Naive thymus-derived CD4-positive, alpha-beta T cell (primary cell): ENCODE measurements at regions of chr15 and their contacts with region 1.

Region 1: GRCh38 chr15:45198337-45199135 is 10.8 kb upstream of the SHF start:
- DNase-seq: peak; percentile 82 to 98 (median 98)
- ATAC-seq: peak; percentile 80
- H3K4me3 ChIP-seq: peak overlapping the region; percentile 69
- H3K4me3 Mint-ChIP-seq: no peak overlapping the region
- H3K27ac ChIP-seq: peak overlapping the region; percentile 90
- H3K27ac Mint-ChIP-seq: no peak overlapping the region
- H3K4me1 ChIP-seq: peaks cover 9 to 10% of the 10 kb centered on the region in 2 donors
- H3K4me1 Mint-ChIP-seq: peaks cover 0 to 16% (median 8%) of the 10 kb centered on the region in 7 donors
- H3K27me3 ChIP-seq: no peaks in the 10 kb centered on the region
- H3K27me3 Mint-ChIP-seq: peaks cover 0 to 11% (median 0%) of the 10 kb centered on the region in 5 donors

Region 2: GRCh38 chr15:43510200-43511011 is 1688.1 kb before region 1 on chr15:
- CTCF ChIA-PET with region 1: no interaction called
- POLR2A ChIA-PET with region 1: no interaction called
- intact Hi-C with region 1: loop called in 1 of 2 experiments (anchors 2 kb)
- DNase-seq: peak; percentile 91 to 96 (median 94)
- ATAC-seq: peak; percentile 97
- H3K4me3 ChIP-seq: peak overlapping the region; percentile 88
- H3K4me3 Mint-ChIP-seq: peak overlapping the region; percentile 89 to 100 (median 94)
- H3K27ac ChIP-seq: peak overlapping the region; percentile 76
- H3K27ac Mint-ChIP-seq: peak overlapping the region; percentile 92 to 99 (median 97)
- H3K4me1 ChIP-seq: peaks cover 14 to 17% of the 10 kb centered on the region in 2 donors
- H3K4me1 Mint-ChIP-seq: peaks cover 14 to 51% (median 28%) of the 10 kb centered on the region in 7 donors
- H3K27me3 ChIP-seq: no peaks in the 10 kb centered on the region
- H3K27me3 Mint-ChIP-seq: peaks cover 0 to 2% (median under 1%) of the 10 kb centered on the region in 5 donors

Region 3: DNA sequence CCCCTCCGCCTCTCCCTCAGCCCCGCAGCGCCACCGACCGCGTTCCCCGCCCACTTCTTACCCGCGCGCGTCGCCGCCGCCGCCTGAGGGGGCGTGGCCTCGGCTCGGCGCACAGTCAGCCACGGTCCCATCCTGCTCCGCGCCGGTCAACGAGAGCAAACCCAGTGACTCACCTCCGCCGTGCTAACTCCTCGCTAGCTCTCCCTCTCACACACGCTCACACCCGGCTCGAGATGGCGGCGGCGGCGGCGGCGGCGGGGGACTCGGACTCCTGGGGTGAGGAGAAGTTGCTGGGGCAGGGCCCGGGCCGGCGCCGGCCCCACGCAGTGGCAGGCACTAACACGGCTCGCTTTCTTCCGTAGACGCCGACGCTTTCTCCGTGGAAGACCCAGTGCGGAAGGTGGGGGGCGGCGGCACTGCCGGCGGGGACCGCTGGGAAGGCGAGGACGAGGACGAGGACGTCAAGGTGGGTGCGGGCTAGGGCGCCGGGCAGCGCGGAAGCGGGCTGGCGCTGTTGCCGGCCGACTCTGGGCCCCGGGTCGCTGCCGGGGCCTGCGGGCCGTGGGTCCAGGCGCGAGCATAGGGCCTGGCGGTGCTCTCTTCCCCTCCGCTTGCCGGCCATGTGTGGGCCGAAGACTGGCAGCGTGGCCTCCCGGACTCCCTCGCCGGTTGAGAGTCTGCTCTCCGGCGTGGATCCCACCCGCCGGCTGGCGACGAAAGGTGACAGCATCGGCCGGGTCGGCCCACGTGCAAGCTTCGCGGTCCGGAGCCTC is 661.4 kb before region 1 on chr15 and contains the start of gene EIF3J:
- CTCF ChIA-PET with region 1: no interaction called
- POLR2A ChIA-PET with region 1: interaction called, 4 read pairs
- intact Hi-C with region 1: loop called (anchors 1 to 2 kb)
- DNase-seq: peak; percentile 92 to 96 (median 95)
- ATAC-seq: peak; percentile 95
- H3K4me3 ChIP-seq: peak within 1 kb of the TSS; percentile 96
- H3K4me3 Mint-ChIP-seq: peak within 1 kb of the TSS; percentile 83 to 98 (median 94)
- H3K27ac ChIP-seq: peak within 1 kb of the TSS; percentile 97
- H3K27ac Mint-ChIP-seq: peak within 1 kb of the TSS; percentile 87 to 98 (median 95)
- H3K4me1 ChIP-seq: peaks cover 27 to 29% of the 10 kb centered on the region in 2 donors
- H3K4me1 Mint-ChIP-seq: peaks cover 35 to 60% (median 51%) of the 10 kb centered on the region in 7 donors
- H3K27me3 ChIP-seq: no peaks in the 10 kb centered on the region
- H3K27me3 Mint-ChIP-seq: no peaks in the 10 kb centered on the region
- total RNA-seq, gene EIF3J: 52.9 to 83.4 (median 66.5) TPM

Region 4: GRCh38 chr15:44728576-44729407 is 469.7 kb before region 1 on chr15:
- CTCF ChIA-PET with region 1: no interaction called
- POLR2A ChIA-PET with region 1: interaction called, 3 read pairs
- intact Hi-C with region 1: loop called in 1 of 2 experiments (anchors 5 kb)
- DNase-seq: peak; percentile 75 to 97 (median 96)
- ATAC-seq: peak; percentile 88
- H3K4me3 ChIP-seq: peak overlapping the region; percentile 94
- H3K4me3 Mint-ChIP-seq: peak overlapping the region; percentile 87 to 100 (median 99)
- H3K27ac ChIP-seq: peak overlapping the region; percentile 99
- H3K27ac Mint-ChIP-seq: peak overlapping the region; percentile 98 to 100 (median 100)
- H3K4me1 ChIP-seq: peaks cover 52 to 56% of the 10 kb centered on the region in 2 donors
- H3K4me1 Mint-ChIP-seq: peaks cover 54 to 86% (median 77%) of the 10 kb centered on the region in 7 donors
- H3K27me3 ChIP-seq: no peaks in the 10 kb centered on the region
- H3K27me3 Mint-ChIP-seq: peaks cover 0 to 2% (median 0%) of the 10 kb centered on the region in 5 donors

Region 5: GRCh38 chr15:45126535-45127158 is 71.9 kb before region 1 on chr15:
- CTCF ChIA-PET with region 1: no interaction called
- POLR2A ChIA-PET with region 1: interaction called, 3 read pairs
- intact Hi-C with region 1: loop called (anchors 2 to 10 kb)
- DNase-seq: peak in 7 of 9 donors; percentile 17 to 51 (median 43)
- ATAC-seq: peak; percentile 72
- H3K4me3 ChIP-seq: no peak overlapping the region
- H3K4me3 Mint-ChIP-seq: no peak overlapping the region
- H3K27ac ChIP-seq: no peak overlapping the region
- H3K27ac Mint-ChIP-seq: no peak overlapping the region
- H3K4me1 ChIP-seq: no peaks in the 10 kb centered on the region
- H3K4me1 Mint-ChIP-seq: peaks cover 0 to 13% (median 6%) of the 10 kb centered on the region in 7 donors
- H3K27me3 ChIP-seq: peaks cover 0 to 8% of the 10 kb centered on the region in 2 donors
- H3K27me3 Mint-ChIP-seq: peaks cover 59 to 70% (median 61%) of the 10 kb centered on the region in 5 donors

Region 6: GRCh38 chr15:45279024-45279698 is 80.6 kb after region 1 on chr15:
- CTCF ChIA-PET with region 1: interaction called, 6 read pairs
- POLR2A ChIA-PET with region 1: interaction called, 16 read pairs
- intact Hi-C with region 1: loop called (anchors 1 kb)
- DNase-seq: peak; percentile 93 to 99 (median 98)
- ATAC-seq: peak; percentile 100
- H3K4me3 ChIP-seq: peak overlapping the region; percentile 90
- H3K4me3 Mint-ChIP-seq: peak overlapping the region; percentile 90 to 99 (median 95)
- H3K27ac ChIP-seq: peak overlapping the region; percentile 84
- H3K27ac Mint-ChIP-seq: peak overlapping the region; percentile 84 to 99 (median 93)
- H3K4me1 ChIP-seq: peaks cover 9 to 12% of the 10 kb centered on the region in 2 donors
- H3K4me1 Mint-ChIP-seq: peaks cover 10 to 34% (median 23%) of the 10 kb centered on the region in 7 donors
- H3K27me3 ChIP-seq: no peaks in the 10 kb centered on the region
- H3K27me3 Mint-ChIP-seq: peaks cover 0 to 1% (median 0%) of the 10 kb centered on the region in 5 donors

Region 7: DNA sequence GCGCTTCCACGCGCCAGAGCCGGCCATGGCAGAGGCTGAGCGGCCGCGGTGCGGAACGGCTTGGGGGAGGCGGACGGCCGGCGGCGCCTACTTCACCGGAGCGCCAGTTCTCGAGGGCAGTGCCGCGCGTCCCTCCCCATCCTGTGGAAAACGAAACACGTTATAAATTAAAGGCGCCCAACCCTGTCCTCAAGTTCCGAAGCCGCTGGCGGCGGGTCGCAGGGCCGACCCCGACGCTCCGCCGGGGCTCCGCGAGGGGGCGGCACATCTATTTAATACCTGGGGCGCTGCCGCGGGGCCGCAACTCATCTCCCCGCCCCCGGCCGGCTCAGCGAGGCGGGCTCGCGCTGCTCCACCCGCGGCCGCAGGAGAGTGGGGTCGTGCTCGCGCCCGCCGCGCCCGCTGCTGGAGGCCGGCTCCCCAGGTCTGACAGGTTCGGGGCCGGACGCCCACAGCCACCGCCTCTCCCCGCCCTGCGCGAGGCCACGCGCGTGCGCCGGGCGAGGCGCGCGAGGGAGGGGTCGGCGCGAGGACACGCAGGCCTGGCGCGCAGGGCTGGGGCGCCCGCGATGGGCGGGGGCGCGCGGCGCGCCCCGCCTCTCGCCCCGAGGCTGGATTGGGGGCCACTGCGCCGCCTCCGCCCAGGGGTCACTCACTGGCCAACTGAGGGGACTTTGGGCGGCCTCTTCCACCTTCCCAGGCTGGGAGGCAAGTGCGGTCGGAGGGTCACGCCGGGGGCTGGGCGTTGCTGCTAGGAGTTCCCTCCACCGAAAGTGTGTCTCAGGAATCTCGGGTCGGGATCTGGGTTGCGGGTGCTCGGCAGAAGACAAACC is 324.0 kb after region 1 on chr15 and contains the start of gene SLC30A4:
- CTCF ChIA-PET with region 1: no interaction called
- POLR2A ChIA-PET with region 1: no interaction called
- intact Hi-C with region 1: loop called (anchors 2 to 10 kb)
- DNase-seq: peak; percentile 49 to 75 (median 66)
- ATAC-seq: peak; percentile 92
- H3K4me3 ChIP-seq: peak within 1 kb of the TSS; percentile 66
- H3K4me3 Mint-ChIP-seq: peak within 1 kb of the TSS; percentile 93 to 98 (median 94)
- H3K27ac ChIP-seq: peak within 1 kb of the TSS; percentile 64
- H3K27ac Mint-ChIP-seq: peak within 1 kb of the TSS; percentile 79 to 90 (median 85)
- H3K4me1 ChIP-seq: peaks cover 0 to 8% of the 10 kb centered on the region in 2 donors
- H3K4me1 Mint-ChIP-seq: peaks cover 23 to 43% (median 33%) of the 10 kb centered on the region in 7 donors
- H3K27me3 ChIP-seq: no peaks in the 10 kb centered on the region
- H3K27me3 Mint-ChIP-seq: peaks cover 0 to 40% (median 0%) of the 10 kb centered on the region in 5 donors
- total RNA-seq, gene SLC30A4: 2.6 to 4.4 (median 3.0) TPM

Region 8: GRCh38 chr15:45958922-45959321 is 760.4 kb after region 1 on chr15:
- CTCF ChIA-PET with region 1: no interaction called
- POLR2A ChIA-PET with region 1: no interaction called
- intact Hi-C with region 1: no loop called
- DNase-seq: no peak
- ATAC-seq: no peak
- H3K4me3 ChIP-seq: no peak overlapping the region
- H3K4me3 Mint-ChIP-seq: no peak overlapping the region
- H3K27ac ChIP-seq: no peak overlapping the region
- H3K27ac Mint-ChIP-seq: no peak overlapping the region
- H3K4me1 ChIP-seq: no peaks in the 10 kb centered on the region
- H3K4me1 Mint-ChIP-seq: no peaks in the 10 kb centered on the region
- H3K27me3 ChIP-seq: no peaks in the 10 kb centered on the region
- H3K27me3 Mint-ChIP-seq: peaks cover 0 to 13% (median 5%) of the 10 kb centered on the region in 5 donors